Endothelial cell of umbilical vein (primary cell): ENCODE measurements at regions of chr10 and their contacts with region 1.

Region 1: GRCh38 chr10:323651-324293 is 188.5 kb downstream of the ZMYND11 start:
- DNase-seq: peak; percentile 92
- H3K4me3 ChIP-seq: peak overlapping the region in 1 of 3 experiments; percentile 23
- H3K27ac ChIP-seq: peak overlapping the region; percentile 56
- H3K4me1 ChIP-seq: peaks cover 11% of the 10 kb centered on the region
- H3K27me3 ChIP-seq: no peaks in the 10 kb centered on the region
- CTCF ChIP-seq: no peak
- POLR2A ChIP-seq: no peak

Region 2: DNA sequence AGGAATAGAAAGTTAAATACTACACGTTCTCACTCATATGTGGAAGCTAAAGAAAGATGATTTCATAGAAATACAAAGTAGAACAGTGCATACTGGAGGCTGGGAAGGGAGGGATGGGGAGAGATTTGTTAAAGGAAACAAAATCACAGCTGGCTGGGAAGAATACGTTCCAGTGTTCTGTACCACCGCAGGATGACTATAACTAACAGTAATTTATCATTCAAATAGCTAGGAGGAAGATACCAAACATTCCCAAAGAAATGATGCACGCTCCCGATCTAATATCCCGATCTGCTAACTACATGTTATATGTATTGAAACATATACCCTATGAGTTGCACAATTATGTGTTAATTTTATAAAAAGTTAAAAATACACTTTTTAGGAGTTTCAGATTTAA is 26.2 kb before region 1 on chr10:
- CTCF ChIA-PET with region 1: interaction called, 4 read pairs
- POLR2A ChIA-PET with region 1: no interaction called
- dilution Hi-C with region 1: no loop called
- intact Hi-C with region 1: loop called (anchors 1 kb)
- DNase-seq: no peak
- H3K4me3 ChIP-seq: no peak overlapping the region
- H3K27ac ChIP-seq: peak overlapping the region; percentile 77
- H3K4me1 ChIP-seq: peaks cover 11% of the 10 kb centered on the region
- H3K27me3 ChIP-seq: no peaks in the 10 kb centered on the region
- CTCF ChIP-seq: no peak
- POLR2A ChIP-seq: no peak